HCT116 (cell line): ENCODE measurements at regions of chr6 and their contacts with region 1.

Region 1: GRCh38 chr6:72084992-72085569 is 198.7 kb downstream of the RIMS1 start:
- DNase-seq: no peak
- ATAC-seq: no peak
- H3K4me3 ChIP-seq: no peak overlapping the region
- H3K27ac ChIP-seq: no peak overlapping the region
- H3K4me1 ChIP-seq: no peaks in the 10 kb centered on the region
- H3K27me3 ChIP-seq: no peaks in the 10 kb centered on the region
- CTCF ChIP-seq: peak; percentile 22 to 57 (median 22); a peak in 4 of 6 replicates
- POLR2A ChIP-seq: no peak
- RAD21 ChIP-seq: peak; percentile 44

Region 2: GRCh38 chr6:71211799-71212198 is 873.3 kb before region 1 on chr6:
- CTCF ChIA-PET with region 1: no interaction called
- POLR2A ChIA-PET with region 1: no interaction called
- RAD21 ChIA-PET with region 1: no interaction called
- intact Hi-C with region 1: no loop called
- DNase-seq: no peak
- ATAC-seq: no peak
- H3K4me3 ChIP-seq: no peak overlapping the region
- H3K27ac ChIP-seq: no peak overlapping the region
- H3K4me1 ChIP-seq: no peaks in the 10 kb centered on the region
- H3K27me3 ChIP-seq: peaks cover 5% of the 10 kb centered on the region; the same call in 1 of the 2 replicates
- CTCF ChIP-seq: no peak
- POLR2A ChIP-seq: no peak
- RAD21 ChIP-seq: no peak

Region 3: DNA sequence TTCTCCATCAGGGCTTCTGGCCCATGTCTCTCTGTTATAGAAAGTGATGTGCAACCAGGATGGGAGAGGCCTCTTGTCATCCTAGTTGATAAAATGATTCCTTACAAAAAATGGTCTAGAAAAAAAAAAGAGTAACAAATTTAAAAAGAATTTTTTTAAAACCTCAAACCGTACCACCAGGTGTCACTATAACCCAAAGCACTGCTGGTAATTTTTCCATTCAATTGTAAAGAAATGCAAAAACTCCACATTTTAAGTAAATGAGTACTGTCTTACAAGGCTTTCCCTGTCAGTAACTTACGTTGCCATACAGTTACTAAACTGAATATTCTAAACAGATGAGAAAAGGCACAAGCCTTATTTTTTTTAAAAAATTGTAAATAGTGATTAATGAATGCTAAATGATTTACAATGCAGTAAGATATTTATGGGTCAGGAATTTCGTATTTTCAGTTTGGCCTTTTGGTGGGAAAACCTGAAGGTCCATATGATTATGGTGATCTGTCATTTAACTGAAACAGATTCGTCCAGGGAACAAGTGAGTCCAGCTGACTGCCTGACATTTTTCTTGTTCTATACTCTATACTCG is 701.1 kb before region 1 on chr6:
- CTCF ChIA-PET with region 1: no interaction called
- POLR2A ChIA-PET with region 1: no interaction called
- RAD21 ChIA-PET with region 1: no interaction called
- intact Hi-C with region 1: loop called (anchors 1 kb)
- DNase-seq: peak; percentile 22
- ATAC-seq: no peak
- H3K4me3 ChIP-seq: no peak overlapping the region
- H3K27ac ChIP-seq: no peak overlapping the region
- H3K4me1 ChIP-seq: no peaks in the 10 kb centered on the region; a peak in 1 of 4 replicates
- H3K27me3 ChIP-seq: no peaks in the 10 kb centered on the region
- CTCF ChIP-seq: peak; percentile 45 to 67 (median 60); a peak in 4 of 6 replicates
- POLR2A ChIP-seq: no peak
- RAD21 ChIP-seq: peak; percentile 80

Region 4: GRCh38 chr6:71533939-71534379 is 551.1 kb before region 1 on chr6:
- CTCF ChIA-PET with region 1: no interaction called
- POLR2A ChIA-PET with region 1: no interaction called
- RAD21 ChIA-PET with region 1: no interaction called
- intact Hi-C with region 1: loop called (anchors 1 kb)
- DNase-seq: peak; percentile 3
- ATAC-seq: no peak
- H3K4me3 ChIP-seq: no peak overlapping the region
- H3K27ac ChIP-seq: no peak overlapping the region
- H3K4me1 ChIP-seq: no peaks in the 10 kb centered on the region
- H3K27me3 ChIP-seq: no peaks in the 10 kb centered on the region; the same call in 1 of the 2 replicates
- CTCF ChIP-seq: peak in 2 of 3 experiments; percentile 41 to 44; a peak in 4 of 6 replicates
- POLR2A ChIP-seq: no peak
- RAD21 ChIP-seq: peak; percentile 44; the same call in 1 of the 2 replicates

Region 5: DNA sequence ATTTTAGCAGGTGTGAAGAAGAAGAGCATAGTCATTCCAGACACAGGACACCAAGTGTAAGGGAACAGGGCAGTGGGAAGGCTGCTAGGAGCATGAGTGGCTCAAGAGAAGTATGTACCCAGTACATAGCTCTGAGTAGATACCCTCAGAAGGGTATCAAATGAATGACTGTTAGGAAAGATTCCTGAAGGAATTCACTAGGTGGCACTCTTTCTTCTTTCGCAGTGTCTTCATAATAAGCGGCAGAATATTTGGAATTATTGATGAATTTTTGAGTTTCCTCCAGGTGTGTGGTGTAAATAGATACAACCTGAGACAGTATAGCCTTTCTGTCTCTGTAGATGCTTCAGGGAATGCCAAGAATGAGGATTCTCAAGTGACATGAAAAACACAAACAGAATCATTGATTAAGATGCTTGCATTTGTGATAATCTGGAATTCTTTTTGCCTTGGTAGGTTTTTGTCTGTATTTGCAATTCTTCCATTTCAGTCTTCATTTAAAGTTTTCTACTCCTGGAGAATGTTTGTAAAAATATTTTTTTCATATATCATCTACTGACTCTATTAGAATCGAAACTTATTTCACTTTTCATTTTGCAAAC is 463.1 kb before region 1 on chr6:
- CTCF ChIA-PET with region 1: interaction called, 6 read pairs
- POLR2A ChIA-PET with region 1: no interaction called
- RAD21 ChIA-PET with region 1: no interaction called
- intact Hi-C with region 1: loop called (anchors 1 kb)
- DNase-seq: peak; percentile 2
- ATAC-seq: peak; percentile 58; the same call in 1 of the 2 replicates
- H3K4me3 ChIP-seq: no peak overlapping the region
- H3K27ac ChIP-seq: no peak overlapping the region
- H3K4me1 ChIP-seq: no peaks in the 10 kb centered on the region
- H3K27me3 ChIP-seq: no peaks in the 10 kb centered on the region
- CTCF ChIP-seq: peak in 2 of 3 experiments; percentile 28 to 49; a peak in 3 of 6 replicates
- POLR2A ChIP-seq: no peak
- RAD21 ChIP-seq: peak; percentile 32; the same call in 1 of the 2 replicates